Uterus (tissue), 4 donors: ENCODE measurements at regions of chrX and their contacts with region 1.

Region 1: DNA sequence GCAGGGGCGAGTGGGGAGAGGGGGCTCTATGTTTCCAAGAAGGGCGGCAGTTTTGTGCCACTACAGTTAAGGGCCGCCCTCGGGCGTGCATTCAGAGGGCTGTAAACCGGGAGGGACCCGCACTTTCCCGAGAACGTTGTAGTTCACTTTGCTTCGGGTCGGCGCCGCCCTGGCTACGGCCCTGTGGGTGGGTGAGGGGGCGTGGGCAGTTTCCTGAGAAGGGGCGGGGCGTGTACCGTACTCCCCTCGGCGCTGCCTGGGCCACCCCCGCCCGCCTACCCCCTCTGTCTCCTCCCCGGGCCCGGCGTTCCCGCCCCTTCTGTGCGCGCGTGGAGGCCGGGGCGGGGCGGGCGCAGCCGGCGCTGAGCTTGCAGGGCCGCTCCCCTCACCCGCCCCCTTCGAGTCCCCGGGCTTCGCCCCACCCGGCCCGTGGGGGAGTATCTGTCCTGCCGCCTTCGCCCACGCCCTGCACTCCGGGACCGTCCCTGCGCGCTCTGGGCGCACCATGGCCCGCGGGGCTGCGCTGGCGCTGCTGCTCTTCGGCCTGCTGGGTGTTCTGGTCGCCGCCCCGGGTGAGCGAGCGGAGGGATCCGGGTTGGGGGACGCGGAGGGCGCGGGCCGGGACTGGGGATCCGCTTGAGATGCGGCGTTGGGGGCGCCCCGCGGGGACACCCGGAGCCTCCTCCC is at the start of gene CD99:
- DNase-seq: peak; percentile 93
- H3K4me3 ChIP-seq: peak within 1 kb of the TSS; percentile 68 to 85
- H3K27ac ChIP-seq: peak within 1 kb of the TSS; percentile 87 to 89
- H3K4me1 ChIP-seq: peaks cover under 1 to 21% of the 10 kb centered on the region in 2 donors
- H3K27me3 ChIP-seq: no peaks in the 10 kb centered on the region
- CTCF ChIP-seq: no peak
- POLR2A ChIP-seq: peak in 1 of 2 donors; percentile 73
- total RNA-seq, gene CD99: 81.9 to 329 (median 202) TPM

Region 2: GRCh38 chrX:2614911-2615310 is 76.1 kb before region 1 on chrX:
- intact Hi-C with region 1: loop called (anchors 10 kb)
- DNase-seq: no peak
- H3K4me3 ChIP-seq: no peak overlapping the region
- H3K27ac ChIP-seq: no peak overlapping the region
- H3K4me1 ChIP-seq: no peaks in the 10 kb centered on the region
- H3K27me3 ChIP-seq: no peaks in the 10 kb centered on the region
- CTCF ChIP-seq: peak; percentile 33 to 51 (median 46)
- POLR2A ChIP-seq: no peak